ENCODE measurements at regions of chr11 and their contacts with region 1.

Region 1: DNA sequence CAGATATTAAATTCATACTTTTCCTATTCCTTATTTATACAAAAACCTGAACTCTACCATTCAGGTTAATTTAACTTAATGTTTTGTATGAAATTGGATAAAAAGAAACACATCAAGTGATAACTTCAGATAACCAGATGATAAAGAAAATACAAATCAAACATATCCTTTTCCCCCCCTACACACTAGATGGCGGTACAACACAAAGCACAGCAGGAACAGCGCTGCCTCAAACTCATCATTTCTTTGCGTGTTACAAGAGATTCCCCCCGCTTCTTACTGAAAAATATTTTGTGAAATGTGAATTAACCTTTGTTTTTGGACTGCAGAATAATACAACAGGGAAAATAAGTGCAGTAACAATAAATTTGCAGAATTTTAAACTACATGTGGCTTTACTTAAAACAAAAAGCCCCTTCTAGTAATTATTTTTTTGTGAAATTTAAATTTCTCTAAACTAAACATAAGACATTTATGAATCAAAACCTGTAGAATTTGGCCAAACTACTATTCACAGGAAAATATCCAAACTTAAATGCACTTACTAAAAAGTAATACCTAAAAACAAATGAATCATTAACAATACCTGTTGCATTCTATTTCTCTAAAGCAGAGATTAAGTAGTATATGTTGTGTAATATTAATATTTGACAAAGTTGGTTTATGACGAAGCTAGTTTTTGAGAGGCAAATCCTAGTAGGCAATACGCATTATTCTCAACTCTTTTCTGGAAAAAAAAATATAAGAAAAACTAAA is 74.4 kb downstream of the ARHGAP32 start:
- DNase-seq: peak; percentile 64
- ATAC-seq: peak; percentile 53
- H3K4me3 ChIP-seq: no peak overlapping the region
- H3K4me3 Mint-ChIP-seq: no peak overlapping the region
- H3K27ac ChIP-seq: no peak overlapping the region
- H3K27ac Mint-ChIP-seq: no peak overlapping the region
- H3K4me1 ChIP-seq: no peaks in the 10 kb centered on the region
- H3K4me1 Mint-ChIP-seq: no peaks in the 10 kb centered on the region
- H3K27me3 ChIP-seq: no peaks in the 10 kb centered on the region
- H3K27me3 Mint-ChIP-seq: peaks cover 5% of the 10 kb centered on the region
- CTCF ChIP-seq: peak; percentile 90

Region 2: GRCh38 chr11:129331871-129332274 is 214.1 kb after region 1 on chr11:
- CTCF ChIA-PET with region 1: interaction called, 37 read pairs
- POLR2A ChIA-PET with region 1: no interaction called
- intact Hi-C with region 1: no loop called
- DNase-seq: peak; percentile 63
- ATAC-seq: peak; percentile 43
- H3K4me3 ChIP-seq: no peak overlapping the region
- H3K4me3 Mint-ChIP-seq: no peak overlapping the region
- H3K27ac ChIP-seq: no peak overlapping the region
- H3K27ac Mint-ChIP-seq: no peak overlapping the region
- H3K4me1 ChIP-seq: no peaks in the 10 kb centered on the region
- H3K4me1 Mint-ChIP-seq: peaks cover 3% of the 10 kb centered on the region
- H3K27me3 ChIP-seq: no peaks in the 10 kb centered on the region
- H3K27me3 Mint-ChIP-seq: peaks cover 3% of the 10 kb centered on the region
- CTCF ChIP-seq: peak; percentile 78

Region 3: GRCh38 chr11:129695575-129696308 is 578.0 kb after region 1 on chr11:
- CTCF ChIA-PET with region 1: interaction called, 3 read pairs
- POLR2A ChIA-PET with region 1: no interaction called
- intact Hi-C with region 1: loop called (anchors 5 kb)
- DNase-seq: peak; percentile 60
- ATAC-seq: peak; percentile 89
- H3K4me3 ChIP-seq: peak overlapping the region in 4 of 5 experiments; percentile 41 to 53 (median 46)
- H3K4me3 Mint-ChIP-seq: peak overlapping the region; percentile 80
- H3K27ac ChIP-seq: no peak overlapping the region
- H3K27ac Mint-ChIP-seq: no peak overlapping the region
- H3K4me1 ChIP-seq: peaks cover 5 to 10% of the 10 kb centered on the region in 2 donors
- H3K4me1 Mint-ChIP-seq: peaks cover 4% of the 10 kb centered on the region
- H3K27me3 ChIP-seq: peaks cover 0 to 3% (median 0%) of the 10 kb centered on the region in 4 experiments
- H3K27me3 Mint-ChIP-seq: peaks cover 30% of the 10 kb centered on the region
- CTCF ChIP-seq: peak; percentile 62